Naive thymus-derived CD4-positive, alpha-beta T cell (primary cell): ENCODE measurements at regions of chr2 and their contacts with region 1.

Region 1: DNA sequence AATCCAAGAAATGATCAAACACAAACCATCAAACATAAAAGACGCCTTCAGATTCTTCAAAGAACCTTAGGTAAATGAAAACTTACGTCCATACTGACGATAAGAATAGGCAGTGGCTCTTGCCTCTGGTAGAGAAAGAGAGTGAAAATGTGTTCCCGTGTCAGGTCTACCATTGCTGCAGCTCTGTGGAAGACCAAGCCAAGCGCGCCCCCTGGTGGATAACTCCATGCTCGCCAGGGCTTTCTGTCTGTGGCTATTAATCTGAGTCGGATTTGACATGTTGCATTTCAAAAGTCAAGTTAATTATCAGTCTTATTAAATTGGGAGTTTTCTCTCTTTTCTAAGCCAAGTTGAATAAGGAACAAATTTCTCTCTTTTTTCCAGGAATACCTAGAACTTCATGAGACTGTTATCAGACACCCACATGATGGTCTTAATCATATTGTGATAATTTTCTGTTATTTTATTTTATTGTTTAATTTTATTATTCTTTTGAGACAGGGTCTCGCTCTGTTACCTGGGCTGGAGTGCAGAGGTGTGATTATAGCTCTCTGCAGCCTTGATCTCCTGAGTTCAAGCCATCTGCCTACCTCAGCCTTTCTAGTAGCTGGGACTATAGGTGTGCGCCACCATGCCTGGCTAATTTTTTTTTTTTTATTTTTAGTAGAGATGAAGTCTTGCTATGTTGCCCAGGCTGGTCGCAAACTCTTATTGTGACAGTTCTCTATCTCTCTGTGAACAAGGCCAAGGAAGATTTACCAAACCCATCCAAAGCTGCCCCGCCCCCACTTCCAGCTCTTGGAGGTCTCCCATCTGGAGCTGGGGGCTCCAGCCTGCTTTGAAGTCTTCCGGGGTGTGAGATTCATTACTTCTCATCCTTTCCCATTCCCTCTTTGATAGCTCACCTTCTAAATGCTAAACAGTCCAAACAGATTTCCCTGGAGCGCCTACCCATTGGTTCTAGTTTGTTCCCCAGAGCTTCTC is 15.8 kb upstream of the ZAP70 start:
- DNase-seq: peak; percentile 78 to 94 (median 87)
- ATAC-seq: peak; percentile 95
- H3K4me3 ChIP-seq: no peak overlapping the region
- H3K4me3 Mint-ChIP-seq: peak overlapping the region in 4 of 10 donors; percentile 19 to 59 (median 23)
- H3K27ac ChIP-seq: no peak overlapping the region
- H3K27ac Mint-ChIP-seq: peak overlapping the region in 2 of 9 donors; percentile 30 to 46
- H3K4me1 ChIP-seq: no peaks in the 10 kb centered on the region
- H3K4me1 Mint-ChIP-seq: peaks cover 4 to 16% (median 13%) of the 10 kb centered on the region in 7 donors
- H3K27me3 ChIP-seq: no peaks in the 10 kb centered on the region
- H3K27me3 Mint-ChIP-seq: peaks cover 0 to 6% (median 0%) of the 10 kb centered on the region in 5 donors

Region 2: GRCh38 chr2:97645695-97646629 is 51.6 kb before region 1 on chr2 and contains the start of gene COX5B:
- CTCF ChIA-PET with region 1: interaction called, 4 read pairs
- POLR2A ChIA-PET with region 1: interaction called, 14 read pairs
- intact Hi-C with region 1: loop called (anchors 1 kb)
- DNase-seq: peak; percentile 91 to 99 (median 98)
- ATAC-seq: peak; percentile 99
- H3K4me3 ChIP-seq: peak within 1 kb of the TSS; percentile 99
- H3K4me3 Mint-ChIP-seq: peak within 1 kb of the TSS; percentile 86 to 97 (median 94)
- H3K27ac ChIP-seq: peak within 1 kb of the TSS; percentile 97
- H3K27ac Mint-ChIP-seq: peak within 1 kb of the TSS; percentile 91 to 99 (median 98)
- H3K4me1 ChIP-seq: peaks cover 15 to 17% of the 10 kb centered on the region in 2 donors
- H3K4me1 Mint-ChIP-seq: peaks cover 15 to 32% (median 26%) of the 10 kb centered on the region in 7 donors
- H3K27me3 ChIP-seq: no peaks in the 10 kb centered on the region
- H3K27me3 Mint-ChIP-seq: no peaks in the 10 kb centered on the region
- total RNA-seq, gene COX5B: 111 to 213 (median 122) TPM

Region 3: GRCh38 chr2:97710596-97711386 is 13.2 kb after region 1 on chr2:
- CTCF ChIA-PET with region 1: interaction called, 17 read pairs
- POLR2A ChIA-PET with region 1: interaction called, 8 read pairs
- intact Hi-C with region 1: loop called in 1 of 2 experiments (anchors 2 kb)
- DNase-seq: peak in 1 of 9 donors; percentile 50
- ATAC-seq: no peak
- H3K4me3 ChIP-seq: no peak overlapping the region
- H3K4me3 Mint-ChIP-seq: peak overlapping the region in 9 of 10 donors; percentile 12 to 98 (median 38)
- H3K27ac ChIP-seq: peak overlapping the region; percentile 95
- H3K27ac Mint-ChIP-seq: peak overlapping the region; percentile 12 to 100 (median 97)
- H3K4me1 ChIP-seq: peaks cover 35 to 42% of the 10 kb centered on the region in 2 donors
- H3K4me1 Mint-ChIP-seq: peaks cover 42 to 62% (median 48%) of the 10 kb centered on the region in 7 donors
- H3K27me3 ChIP-seq: no peaks in the 10 kb centered on the region
- H3K27me3 Mint-ChIP-seq: peaks cover 0 to 2% (median 0%) of the 10 kb centered on the region in 5 donors

Region 4: DNA sequence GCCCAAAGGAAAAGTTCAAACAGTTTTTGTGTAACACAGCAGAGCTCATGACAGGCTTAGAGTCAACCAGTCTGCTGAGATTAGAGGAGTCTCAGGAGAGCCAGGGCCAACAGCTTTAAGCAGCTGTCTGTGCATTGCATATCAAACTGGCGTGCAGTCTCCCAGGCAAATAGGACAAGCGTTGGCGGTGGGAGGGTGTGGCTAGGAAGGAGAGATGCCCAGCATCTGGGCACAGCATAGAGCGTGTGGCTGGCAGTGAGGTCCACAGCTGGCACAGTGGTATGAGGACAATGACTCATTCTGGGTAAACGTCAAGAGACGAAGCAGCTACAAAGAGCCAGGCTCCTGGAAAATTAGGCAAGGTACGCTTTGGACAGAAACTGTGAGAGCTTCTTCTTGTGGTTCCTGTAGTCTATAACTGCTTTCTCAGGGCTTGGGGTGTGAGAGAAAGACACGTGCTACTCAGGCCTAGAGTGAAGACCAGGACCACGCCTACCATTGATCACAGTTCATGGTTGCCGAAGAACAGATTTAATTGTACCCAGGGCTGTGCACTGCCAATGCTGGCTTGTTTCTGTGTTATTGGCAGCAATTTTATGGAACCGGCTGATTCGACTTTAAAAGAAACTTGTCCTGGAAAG is 30.7 kb after region 1 on chr2:
- CTCF ChIA-PET with region 1: interaction called, 12 read pairs
- POLR2A ChIA-PET with region 1: interaction called, 4 read pairs
- intact Hi-C with region 1: no loop called
- DNase-seq: peak in 1 of 9 donors; percentile 10
- ATAC-seq: peak; percentile 44
- H3K4me3 ChIP-seq: no peak overlapping the region
- H3K4me3 Mint-ChIP-seq: peak overlapping the region in 4 of 10 donors; percentile 33 to 58 (median 48)
- H3K27ac ChIP-seq: peak overlapping the region; percentile 10
- H3K27ac Mint-ChIP-seq: peak overlapping the region in 8 of 9 donors; percentile 48 to 89 (median 74)
- H3K4me1 ChIP-seq: peaks cover 9 to 25% of the 10 kb centered on the region in 2 donors
- H3K4me1 Mint-ChIP-seq: peaks cover 26 to 84% (median 48%) of the 10 kb centered on the region in 7 donors
- H3K27me3 ChIP-seq: no peaks in the 10 kb centered on the region
- H3K27me3 Mint-ChIP-seq: no peaks in the 10 kb centered on the region

Region 5: GRCh38 chr2:97740590-97741182 is 43.1 kb after region 1 on chr2:
- CTCF ChIA-PET with region 1: interaction called, 15 read pairs
- POLR2A ChIA-PET with region 1: interaction called, 3 read pairs
- intact Hi-C with region 1: no loop called
- DNase-seq: peak in 5 of 9 donors; percentile 13 to 33 (median 30)
- ATAC-seq: peak; percentile 63
- H3K4me3 ChIP-seq: no peak overlapping the region
- H3K4me3 Mint-ChIP-seq: no peak overlapping the region
- H3K27ac ChIP-seq: no peak overlapping the region
- H3K27ac Mint-ChIP-seq: peak overlapping the region in 8 of 9 donors; percentile 54 to 86 (median 78)
- H3K4me1 ChIP-seq: peaks cover 15 to 55% of the 10 kb centered on the region in 2 donors
- H3K4me1 Mint-ChIP-seq: peaks cover 44 to 66% (median 55%) of the 10 kb centered on the region in 7 donors
- H3K27me3 ChIP-seq: no peaks in the 10 kb centered on the region
- H3K27me3 Mint-ChIP-seq: no peaks in the 10 kb centered on the region

Region 6: GRCh38 chr2:97751752-97752151 is 54.2 kb after region 1 on chr2:
- CTCF ChIA-PET with region 1: interaction called, 29 read pairs
- POLR2A ChIA-PET with region 1: no interaction called
- intact Hi-C with region 1: loop called (anchors 1 kb)
- DNase-seq: no peak
- ATAC-seq: no peak
- H3K4me3 ChIP-seq: no peak overlapping the region
- H3K4me3 Mint-ChIP-seq: no peak overlapping the region
- H3K27ac ChIP-seq: no peak overlapping the region
- H3K27ac Mint-ChIP-seq: peak overlapping the region in 2 of 9 donors; percentile 3 to 33
- H3K4me1 ChIP-seq: peaks cover 10 to 18% of the 10 kb centered on the region in 2 donors
- H3K4me1 Mint-ChIP-seq: peaks cover 14 to 29% (median 22%) of the 10 kb centered on the region in 7 donors
- H3K27me3 ChIP-seq: no peaks in the 10 kb centered on the region
- H3K27me3 Mint-ChIP-seq: no peaks in the 10 kb centered on the region

Region 7: DNA sequence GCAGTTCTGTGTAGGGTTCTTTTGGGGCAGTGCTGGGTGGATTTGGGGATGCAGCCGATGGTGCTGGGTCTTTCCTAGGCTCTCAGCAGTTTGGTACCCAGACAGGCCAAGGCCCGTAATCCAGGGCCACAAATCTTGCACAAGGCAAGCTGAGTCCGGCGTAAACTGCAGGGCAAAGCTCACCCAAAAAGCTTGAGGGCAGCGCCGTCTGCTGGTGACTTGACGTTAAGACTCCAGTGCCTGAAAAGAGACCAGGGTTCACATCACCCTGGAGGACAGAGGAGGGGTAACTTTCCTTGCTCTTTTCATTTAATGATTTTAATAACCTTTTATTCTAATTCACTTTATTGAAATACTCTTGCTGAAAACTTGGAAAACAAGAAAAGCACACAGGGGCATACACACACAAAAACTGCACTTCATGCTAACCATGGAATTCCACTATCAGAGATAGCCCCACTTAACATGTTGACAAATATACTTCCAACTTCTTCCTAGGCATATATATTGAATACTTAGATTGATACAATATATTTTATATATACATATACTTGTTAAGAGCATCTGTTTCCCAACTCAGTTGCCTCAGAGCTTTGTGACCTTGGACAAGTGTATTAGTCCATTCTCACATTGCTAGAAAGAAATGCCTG is 687.6 kb after region 1 on chr2:
- CTCF ChIA-PET with region 1: interaction called, 6 read pairs
- POLR2A ChIA-PET with region 1: no interaction called
- intact Hi-C with region 1: loop called in 1 of 2 experiments (anchors 1 kb)
- DNase-seq: peak; percentile 32 to 70 (median 53)
- ATAC-seq: peak; percentile 88
- H3K4me3 ChIP-seq: no peak overlapping the region
- H3K4me3 Mint-ChIP-seq: no peak overlapping the region
- H3K27ac ChIP-seq: no peak overlapping the region
- H3K27ac Mint-ChIP-seq: peak overlapping the region in 1 of 9 donors; percentile 25
- H3K4me1 ChIP-seq: no peaks in the 10 kb centered on the region
- H3K4me1 Mint-ChIP-seq: peaks cover 0 to 4% (median 0%) of the 10 kb centered on the region in 7 donors
- H3K27me3 ChIP-seq: no peaks in the 10 kb centered on the region
- H3K27me3 Mint-ChIP-seq: peaks cover 3 to 13% (median 4%) of the 10 kb centered on the region in 5 donors